GM23248 (cell line): ENCODE measurements at regions of chr9 and their contacts with region 1.

Region 1: GRCh38 chr9:71302776-71303175 is 181.4 kb upstream of the TRPM3 start:
- DNase-seq: peak; percentile 44
- H3K4me3 ChIP-seq: no peak overlapping the region
- H3K27ac ChIP-seq: peak overlapping the region; percentile 14; the same call in 1 of the 2 replicates
- H3K4me1 ChIP-seq: peaks cover 9% of the 10 kb centered on the region; the same call in 1 of the 2 replicates
- H3K27me3 ChIP-seq: no peaks in the 10 kb centered on the region

Region 2: DNA sequence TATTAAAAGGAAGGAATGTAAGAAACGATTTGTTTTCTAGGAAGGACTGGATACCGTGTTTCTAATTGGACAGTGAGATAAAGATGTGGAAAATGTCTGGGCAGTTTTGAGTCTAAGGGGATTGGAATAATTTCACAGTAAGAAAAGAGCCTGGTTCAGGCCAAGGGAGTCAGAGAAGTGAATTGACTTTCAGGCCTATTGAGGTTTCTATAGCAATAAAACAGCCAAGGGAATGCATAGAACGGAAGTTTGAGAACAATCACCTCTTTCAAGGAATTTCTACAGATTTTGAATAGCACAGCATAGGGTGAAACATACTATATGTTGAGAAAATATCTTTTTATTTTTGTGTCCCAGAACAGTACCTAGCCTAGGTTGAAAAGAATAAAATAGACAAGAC is 90.2 kb after region 1 on chr9:
- in situ Hi-C with region 1: no loop called
- DNase-seq: no peak
- H3K4me3 ChIP-seq: no peak overlapping the region
- H3K27ac ChIP-seq: no peak overlapping the region
- H3K4me1 ChIP-seq: no peaks in the 10 kb centered on the region
- H3K27me3 ChIP-seq: peaks cover 22% of the 10 kb centered on the region

Region 3: GRCh38 chr9:71403106-71403505 is 100.3 kb after region 1 on chr9:
- in situ Hi-C with region 1: loop called (anchors 25 kb)
- DNase-seq: no peak
- H3K4me3 ChIP-seq: no peak overlapping the region
- H3K27ac ChIP-seq: no peak overlapping the region
- H3K4me1 ChIP-seq: no peaks in the 10 kb centered on the region
- H3K27me3 ChIP-seq: 0 out of 2 replicates have a peak, but pooled peaks cover 14% of the 10 kb centered on the region